CD4-positive, alpha-beta T cell (primary cell): ENCODE measurements at regions of chr14 and their contacts with region 1.

Region 1: GRCh38 chr14:66359500-66359899 is 126.7 kb upstream of the CCDC196 start:
- DNase-seq: peak in 7 of 14 experiments; percentile 1 to 77 (median 40)
- ATAC-seq: no peak
- H3K4me3 ChIP-seq: no peak overlapping the region
- H3K4me3 Mint-ChIP-seq: no peak overlapping the region
- H3K27ac ChIP-seq: no peak overlapping the region
- H3K27ac Mint-ChIP-seq: no peak overlapping the region
- H3K4me1 ChIP-seq: peaks cover 3% of the 10 kb centered on the region
- H3K4me1 Mint-ChIP-seq: no peaks in the 10 kb centered on the region
- H3K27me3 ChIP-seq: no peaks in the 10 kb centered on the region
- H3K27me3 Mint-ChIP-seq: no peaks in the 10 kb centered on the region
- CTCF ChIP-seq: peak; percentile 78

Region 2: DNA sequence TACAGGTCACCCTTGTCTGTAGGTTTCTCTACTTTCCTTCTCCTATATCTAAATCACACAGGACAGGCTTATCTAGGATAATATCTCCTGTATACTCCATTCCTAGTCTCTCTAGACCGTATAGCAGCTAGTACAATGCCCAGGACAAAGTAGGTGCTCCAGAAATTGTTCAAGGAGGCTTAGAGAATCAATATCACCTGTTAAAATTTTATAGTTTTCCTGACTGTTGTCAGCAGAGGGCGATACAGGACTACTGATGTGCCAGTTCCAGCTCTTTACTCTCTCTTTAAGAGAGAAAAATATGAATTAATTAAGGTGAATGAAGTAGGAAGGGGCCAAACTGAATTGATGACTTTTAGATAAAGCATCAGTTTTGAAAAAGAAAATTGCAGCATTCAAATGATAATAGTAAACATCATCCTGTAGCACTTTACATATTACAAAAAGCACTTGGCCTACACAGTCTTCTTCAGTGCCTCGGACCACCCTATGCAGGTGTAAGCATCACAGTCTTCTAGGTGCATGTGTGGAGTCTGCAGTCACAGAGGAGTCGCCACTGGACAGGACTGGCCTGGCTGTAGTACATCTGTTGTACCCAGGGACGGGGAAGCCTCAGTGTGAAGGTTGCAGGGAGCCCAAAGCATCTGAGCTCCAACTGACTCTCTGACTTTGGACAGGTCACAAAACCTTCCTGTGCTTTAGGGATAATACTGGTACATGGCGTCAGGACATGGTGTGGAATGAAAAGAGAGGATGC is 1195.3 kb before region 1 on chr14:
- CTCF ChIA-PET with region 1: interaction called, 3 read pairs
- POLR2A ChIA-PET with region 1: no interaction called
- intact Hi-C with region 1: loop called in 1 of 2 experiments (anchors 2 kb)
- DNase-seq: peak in 13 of 14 experiments; percentile 4 to 79 (median 21)
- ATAC-seq: peak; percentile 54
- H3K4me3 ChIP-seq: no peak overlapping the region
- H3K4me3 Mint-ChIP-seq: no peak overlapping the region
- H3K27ac ChIP-seq: no peak overlapping the region
- H3K27ac Mint-ChIP-seq: no peak overlapping the region
- H3K4me1 ChIP-seq: no peaks in the 10 kb centered on the region
- H3K4me1 Mint-ChIP-seq: peaks cover 5% of the 10 kb centered on the region
- H3K27me3 ChIP-seq: no peaks in the 10 kb centered on the region
- H3K27me3 Mint-ChIP-seq: no peaks in the 10 kb centered on the region
- CTCF ChIP-seq: peak; percentile 93

Region 3: DNA sequence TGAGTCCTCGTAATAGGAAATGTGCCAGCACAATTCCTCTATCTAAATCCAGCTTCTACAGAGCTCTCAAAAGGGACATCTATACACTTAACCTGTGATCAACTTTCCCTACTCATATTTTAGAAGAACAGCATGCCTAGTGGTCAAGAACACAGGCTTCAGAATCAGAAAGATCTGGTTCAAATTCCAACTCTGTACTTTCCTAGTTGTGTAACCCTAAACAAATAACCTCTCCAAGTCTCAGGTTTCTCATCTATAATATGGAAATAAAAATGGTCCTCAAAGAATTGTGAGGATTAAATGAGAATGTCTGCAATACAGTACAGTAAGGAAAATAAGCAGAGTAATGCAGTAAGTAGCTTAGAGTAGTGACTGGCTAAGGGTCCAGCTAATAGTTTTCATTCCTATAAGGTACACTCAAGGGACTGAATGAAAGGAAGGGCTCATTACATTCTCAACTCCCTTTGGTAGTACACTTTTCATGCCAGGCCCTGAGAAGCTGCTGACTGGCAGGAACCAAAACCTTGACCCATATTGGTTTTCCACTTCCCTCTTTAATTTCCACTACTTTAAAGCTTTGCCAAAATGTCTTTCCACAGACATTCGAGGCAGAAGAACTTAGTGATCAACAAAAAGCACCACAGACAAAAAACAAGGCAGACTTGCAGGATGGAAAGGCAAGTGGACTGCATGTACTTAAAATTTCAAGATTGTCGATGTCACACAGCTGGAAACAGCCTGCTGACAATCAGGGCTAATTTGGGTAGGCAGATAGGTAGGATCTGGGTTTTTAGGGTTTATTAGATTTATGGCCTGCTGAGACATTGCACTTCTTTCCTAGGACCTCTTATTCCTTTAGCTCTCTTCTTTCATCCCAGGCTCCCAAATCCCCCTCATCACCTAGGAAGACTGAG is 130.9 kb after region 1 on chr14:
- CTCF ChIA-PET with region 1: no interaction called
- POLR2A ChIA-PET with region 1: no interaction called
- intact Hi-C with region 1: loop called in 1 of 2 experiments (anchors 5 kb)
- DNase-seq: no peak
- ATAC-seq: no peak
- H3K4me3 ChIP-seq: no peak overlapping the region
- H3K4me3 Mint-ChIP-seq: no peak overlapping the region
- H3K27ac ChIP-seq: no peak overlapping the region
- H3K27ac Mint-ChIP-seq: no peak overlapping the region
- H3K4me1 ChIP-seq: no peaks in the 10 kb centered on the region
- H3K4me1 Mint-ChIP-seq: peaks cover 3% of the 10 kb centered on the region
- H3K27me3 ChIP-seq: no peaks in the 10 kb centered on the region
- H3K27me3 Mint-ChIP-seq: no peaks in the 10 kb centered on the region
- CTCF ChIP-seq: no peak

Region 4: GRCh38 chr14:67285876-67286452 is 926.5 kb after region 1 on chr14:
- CTCF ChIA-PET with region 1: interaction called, 3 read pairs
- POLR2A ChIA-PET with region 1: no interaction called
- intact Hi-C with region 1: loop called (anchors 2 to 5 kb)
- DNase-seq: peak in 3 of 14 experiments; percentile 48 to 55 (median 51)
- ATAC-seq: no peak
- H3K4me3 ChIP-seq: no peak overlapping the region
- H3K4me3 Mint-ChIP-seq: no peak overlapping the region
- H3K27ac ChIP-seq: no peak overlapping the region
- H3K27ac Mint-ChIP-seq: no peak overlapping the region
- H3K4me1 ChIP-seq: no peaks in the 10 kb centered on the region
- H3K4me1 Mint-ChIP-seq: no peaks in the 10 kb centered on the region
- H3K27me3 ChIP-seq: no peaks in the 10 kb centered on the region
- H3K27me3 Mint-ChIP-seq: no peaks in the 10 kb centered on the region
- CTCF ChIP-seq: peak; percentile 81

Region 5: DNA sequence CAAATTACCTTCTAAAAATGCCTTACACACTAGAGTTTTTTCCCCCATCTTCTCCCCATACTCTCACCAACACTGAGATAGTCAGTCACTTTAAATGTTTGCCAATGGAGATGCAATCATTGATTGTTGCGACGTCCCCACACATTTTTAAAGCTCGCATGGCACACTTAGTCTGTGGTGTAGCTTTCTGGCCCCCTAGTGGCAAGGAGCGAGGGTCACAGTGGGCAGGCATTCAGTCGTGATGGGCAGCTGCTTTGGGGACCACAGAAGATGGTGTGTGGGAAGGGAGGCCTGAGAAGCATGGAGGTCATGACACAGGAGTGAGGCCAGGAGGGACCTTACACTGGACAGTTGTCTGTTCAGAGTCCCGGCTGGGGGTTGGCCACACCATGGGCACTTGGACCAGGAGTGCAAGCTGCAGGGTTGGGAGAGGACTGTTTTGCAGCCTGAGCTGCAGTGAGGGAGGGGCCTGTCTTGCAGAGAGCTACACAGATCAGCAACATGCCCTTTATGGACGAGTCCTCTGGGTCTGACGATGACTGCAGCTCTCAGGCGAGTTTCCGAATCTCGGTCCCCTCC is 1211.9 kb after region 1 on chr14:
- CTCF ChIA-PET with region 1: no interaction called
- POLR2A ChIA-PET with region 1: no interaction called
- intact Hi-C with region 1: loop called in 1 of 2 experiments (anchors 10 kb)
- DNase-seq: peak; percentile 54 to 81 (median 66)
- ATAC-seq: peak; percentile 93
- H3K4me3 ChIP-seq: no peak overlapping the region
- H3K4me3 Mint-ChIP-seq: no peak overlapping the region
- H3K27ac ChIP-seq: no peak overlapping the region
- H3K27ac Mint-ChIP-seq: no peak overlapping the region
- H3K4me1 ChIP-seq: peaks cover 3% of the 10 kb centered on the region
- H3K4me1 Mint-ChIP-seq: no peaks in the 10 kb centered on the region
- H3K27me3 ChIP-seq: no peaks in the 10 kb centered on the region
- H3K27me3 Mint-ChIP-seq: no peaks in the 10 kb centered on the region
- CTCF ChIP-seq: peak; percentile 87